OCI-LY7 (cell line): ENCODE measurements at regions of chr1 and their contacts with region 1.

Region 1: DNA sequence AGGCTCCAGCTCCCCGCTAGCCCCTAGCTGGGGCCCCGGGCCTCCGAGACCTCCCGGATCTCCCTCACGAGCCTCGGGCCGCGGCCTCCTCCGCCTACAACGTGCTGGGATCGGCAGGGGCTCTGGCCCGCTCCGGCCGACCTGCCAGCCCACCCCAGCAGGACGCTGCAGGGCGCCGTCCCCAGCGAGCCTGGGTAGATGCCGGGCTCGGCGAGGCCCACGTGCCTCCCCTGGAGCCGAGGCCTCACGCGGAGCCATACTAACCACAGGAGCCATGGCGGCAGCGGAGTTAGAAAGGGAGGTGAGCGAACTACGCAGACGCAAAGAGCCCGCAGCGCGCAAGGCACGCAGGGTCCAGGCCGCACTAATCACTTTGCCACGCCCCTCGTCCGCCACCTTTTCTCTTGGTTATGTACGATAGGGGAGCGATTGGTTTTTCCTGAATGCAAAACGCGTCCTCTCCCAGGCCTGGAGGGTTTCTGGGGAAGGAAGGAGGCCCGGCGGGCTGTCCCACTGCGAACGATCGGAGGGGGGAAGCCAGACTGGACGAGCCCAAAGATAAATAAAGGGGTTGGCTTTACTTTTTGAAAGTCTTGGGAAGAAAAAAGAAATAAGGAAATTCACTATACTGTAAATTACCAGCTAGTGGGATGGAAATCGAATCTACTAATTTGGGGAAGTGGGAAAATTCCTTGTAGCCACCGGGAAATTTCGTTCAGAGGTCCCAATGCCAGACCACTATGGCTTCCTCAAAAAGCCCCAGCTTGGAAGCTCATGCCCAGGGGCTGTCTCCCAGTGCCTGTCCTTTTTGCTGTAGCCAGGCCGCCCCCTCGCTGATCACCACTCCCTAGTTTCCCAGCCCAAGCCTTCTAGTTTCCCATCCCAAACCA is at the start of gene RPL22:
- DNase-seq: peak; percentile 100
- H3K4me3 ChIP-seq: peak within 1 kb of the TSS; percentile 93
- H3K27ac ChIP-seq: peak within 1 kb of the TSS; percentile 53
- H3K4me1 ChIP-seq: peaks cover 31% of the 10 kb centered on the region
- CTCF ChIP-seq: no peak
- total RNA-seq, gene RPL22: 249 and 330 TPM in 2 replicates

Region 2: GRCh38 chr1:5992026-5992813 is 207.3 kb before region 1 on chr1 and contains the start of gene NPHP4:
- CTCF ChIA-PET with region 1: no interaction called
- POLR2A ChIA-PET with region 1: no interaction called
- intact Hi-C with region 1: loop called (anchors 2 kb)
- DNase-seq: peak; percentile 100
- H3K4me3 ChIP-seq: peak within 1 kb of the TSS; percentile 91
- H3K27ac ChIP-seq: peak within 1 kb of the TSS; percentile 37
- H3K4me1 ChIP-seq: peaks cover 20% of the 10 kb centered on the region
- CTCF ChIP-seq: 0 out of 2 replicates have a peak, but pooled peaks have one; percentile 18
- total RNA-seq, gene NPHP4: 9.2 and 13.4 TPM in 2 replicates

Region 3: GRCh38 chr1:6026095-6026809 is 173.3 kb before region 1 on chr1:
- CTCF ChIA-PET with region 1: no interaction called
- POLR2A ChIA-PET with region 1: no interaction called
- intact Hi-C with region 1: loop called (anchors 1 kb)
- DNase-seq: peak; percentile 93
- H3K4me3 ChIP-seq: peak overlapping the region; percentile 73
- H3K27ac ChIP-seq: peak overlapping the region; percentile 53
- H3K4me1 ChIP-seq: peaks cover 49% of the 10 kb centered on the region
- CTCF ChIP-seq: no peak

Region 4: GRCh38 chr1:6080469-6080868 is 119.1 kb before region 1 on chr1:
- CTCF ChIA-PET with region 1: no interaction called
- POLR2A ChIA-PET with region 1: no interaction called
- intact Hi-C with region 1: no loop called
- DNase-seq: no peak
- H3K4me3 ChIP-seq: no peak overlapping the region
- H3K27ac ChIP-seq: no peak overlapping the region
- H3K4me1 ChIP-seq: no peaks in the 10 kb centered on the region
- CTCF ChIP-seq: peak; percentile 17; the same call in 1 of the 2 replicates

Region 5: GRCh38 chr1:6235296-6235677 is 35.7 kb after region 1 on chr1:
- CTCF ChIA-PET with region 1: no interaction called
- POLR2A ChIA-PET with region 1: interaction called, 7 read pairs
- intact Hi-C with region 1: loop called (anchors 5 kb)
- DNase-seq: peak; percentile 40
- H3K4me3 ChIP-seq: peak overlapping the region; percentile 96
- H3K27ac ChIP-seq: peak overlapping the region; percentile 14
- H3K4me1 ChIP-seq: peaks cover 20% of the 10 kb centered on the region
- CTCF ChIP-seq: no peak